ENCODE measurements at regions of chr7 and their contacts with region 1.

Region 1: DNA sequence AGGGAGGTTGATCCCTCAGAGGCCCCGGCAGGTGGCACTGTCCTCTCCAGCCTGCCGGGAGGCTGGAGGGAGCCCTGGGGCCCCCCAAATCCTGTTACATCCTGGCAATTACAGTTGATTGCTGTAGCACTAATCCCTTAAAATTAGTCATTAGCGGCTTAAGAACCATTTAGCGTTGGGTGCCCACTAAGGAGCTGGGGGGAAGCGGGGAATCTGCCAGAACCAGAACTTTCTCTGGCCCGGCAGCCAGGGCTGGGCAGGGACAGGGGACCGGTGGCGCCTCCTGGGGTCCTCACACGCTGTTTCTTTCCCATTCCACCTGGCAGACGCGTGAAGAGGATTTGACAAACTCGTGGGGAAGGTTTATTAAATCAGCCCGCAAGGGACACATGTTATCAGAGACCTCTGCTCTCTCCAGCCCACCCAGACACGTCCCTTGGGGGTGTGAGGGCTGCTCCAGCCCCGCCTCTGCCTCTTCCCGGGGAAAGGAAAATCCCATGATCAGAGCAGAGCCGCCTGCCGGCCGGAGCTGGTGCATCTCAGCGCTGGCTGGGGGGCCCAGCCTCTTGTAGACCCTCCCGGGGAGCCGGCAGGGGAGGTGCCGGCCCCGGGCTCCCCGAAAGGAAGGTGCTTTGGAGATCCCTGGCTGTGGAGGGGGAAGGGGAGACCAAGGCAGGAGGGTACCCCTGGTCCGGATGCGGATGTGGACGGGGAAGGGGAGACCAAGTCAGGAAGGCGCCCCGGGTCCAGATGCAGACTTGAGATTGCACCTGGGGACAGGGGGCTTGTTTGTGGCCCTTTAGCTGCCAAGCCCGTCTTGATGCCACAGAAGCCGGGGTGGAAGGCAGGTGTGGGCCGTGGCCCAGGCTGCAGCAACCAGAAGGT is 142.7 kb downstream of the ELFN1 start:
- DNase-seq: no peak
- ATAC-seq: peak in 5 of 8 donors; percentile 15 to 78 (median 42)
- H3K4me3 ChIP-seq: no peak overlapping the region
- H3K27ac ChIP-seq: no peak overlapping the region
- H3K4me1 ChIP-seq: peaks cover 0 to 17% (median 8%) of the 10 kb centered on the region in 9 donors
- H3K27me3 ChIP-seq: peaks cover 0 to 3% (median 0%) of the 10 kb centered on the region in 7 donors
- CTCF ChIP-seq: peak in 7 of 9 donors; percentile 26 to 65 (median 41)

Region 2: GRCh38 chr7:2019607-2020511 is 207.1 kb after region 1 on chr7:
- intact Hi-C with region 1: loop called in 1 of 10 experiments (anchors 10 kb)
- DNase-seq: peak; percentile 69 to 74
- ATAC-seq: peak; percentile 73 to 90 (median 84)
- H3K4me3 ChIP-seq: peak overlapping the region in 7 of 10 donors; percentile 12 to 41 (median 31)
- H3K27ac ChIP-seq: peak overlapping the region in 9 of 10 donors; percentile 34 to 87 (median 71)
- H3K4me1 ChIP-seq: peaks cover 0 to 32% (median 7%) of the 10 kb centered on the region in 9 donors
- H3K27me3 ChIP-seq: no peaks in the 10 kb centered on the region
- CTCF ChIP-seq: no peak

Region 3: DNA sequence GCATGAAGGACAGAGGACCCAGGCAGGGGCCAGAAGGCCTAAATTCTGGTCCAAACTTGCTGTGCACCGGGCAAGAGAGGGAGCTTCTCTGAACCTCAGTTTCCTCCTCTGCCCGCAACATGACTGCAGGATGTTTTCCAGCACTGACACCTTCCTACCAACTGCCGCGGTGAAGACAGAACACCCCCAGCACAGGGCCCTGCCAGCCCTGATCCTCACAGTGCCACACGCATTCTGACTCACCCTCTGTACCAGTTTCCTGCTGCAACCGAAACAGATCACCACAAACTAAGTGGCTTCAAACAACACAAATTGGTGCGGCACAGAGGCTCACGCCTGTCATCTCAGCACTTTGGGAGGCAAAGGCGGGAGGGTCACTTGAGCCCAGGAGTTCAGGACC is 401.9 kb after region 1 on chr7:
- intact Hi-C with region 1: loop called in 5 of 10 experiments (anchors 5 to 10 kb)
- DNase-seq: no peak
- ATAC-seq: peak in 4 of 8 donors; percentile 22 to 39 (median 24)
- H3K4me3 ChIP-seq: no peak overlapping the region
- H3K27ac ChIP-seq: peak overlapping the region in 9 of 10 donors; percentile 31 to 79 (median 72)
- H3K4me1 ChIP-seq: peaks cover 0 to 28% (median 10%) of the 10 kb centered on the region in 9 donors
- H3K27me3 ChIP-seq: no peaks in the 10 kb centered on the region
- CTCF ChIP-seq: no peak

Measured in heart right ventricle (tissue), 16 donors.